ENCODE measurements at regions of chr11 and their contacts with region 1.

Region 1: GRCh38 chr11:86101941-86102407 is 33.1 kb upstream of the PICALM start:
- DNase-seq: no peak
- H3K4me3 ChIP-seq: no peak overlapping the region
- CTCF ChIP-seq: no peak

Region 2: DNA sequence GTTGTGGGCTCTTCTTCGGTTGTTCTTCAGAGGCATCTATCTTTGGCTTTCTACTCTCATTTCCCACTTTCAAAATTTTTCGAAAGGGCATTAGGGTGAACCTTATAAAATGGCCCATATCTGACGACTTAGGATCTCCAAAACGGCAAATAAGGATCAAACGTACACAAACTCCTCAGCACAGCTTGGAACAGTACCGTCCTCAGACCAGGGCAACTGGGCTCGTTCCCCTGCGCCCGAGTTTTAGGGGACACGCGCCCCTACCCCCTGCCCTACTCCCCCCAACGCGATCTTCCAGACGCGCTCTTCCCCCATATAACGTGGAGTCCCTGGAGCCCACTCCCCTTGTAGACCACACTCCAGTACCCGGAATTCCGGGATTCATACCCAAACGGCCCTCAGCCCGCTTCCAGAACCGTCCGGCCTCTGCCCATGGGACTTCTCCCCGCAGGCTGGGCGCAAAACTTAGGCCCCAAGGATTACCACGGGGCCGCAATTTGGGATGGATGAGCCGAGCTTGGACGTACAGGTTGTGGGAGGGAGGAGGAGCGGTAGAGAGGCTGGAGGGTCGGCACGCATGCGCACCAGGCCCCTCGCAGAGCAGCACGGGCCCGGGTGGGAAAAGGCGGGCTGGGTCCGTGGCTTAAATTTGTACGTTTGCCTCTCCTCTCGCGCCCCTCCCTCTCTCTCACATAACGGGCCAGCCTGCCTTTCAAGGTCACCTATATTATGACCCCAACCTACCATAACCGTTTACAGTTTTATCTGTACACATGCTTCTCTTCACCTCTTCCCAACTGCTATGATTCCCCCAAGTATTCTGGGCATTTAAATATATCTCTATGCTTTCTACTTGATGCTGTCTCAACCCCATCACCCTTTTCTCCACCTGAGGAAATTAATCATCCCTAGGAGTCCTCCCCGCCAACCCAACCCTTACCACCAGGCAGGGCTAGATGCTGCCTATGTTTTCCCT is 419.4 kb before region 1 on chr11:
- CTCF ChIA-PET with region 1: no interaction called
- POLR2A ChIA-PET with region 1: no interaction called
- DNase-seq: no peak
- H3K4me3 ChIP-seq: peak overlapping the region; percentile 61
- CTCF ChIP-seq: no peak

Region 3: DNA sequence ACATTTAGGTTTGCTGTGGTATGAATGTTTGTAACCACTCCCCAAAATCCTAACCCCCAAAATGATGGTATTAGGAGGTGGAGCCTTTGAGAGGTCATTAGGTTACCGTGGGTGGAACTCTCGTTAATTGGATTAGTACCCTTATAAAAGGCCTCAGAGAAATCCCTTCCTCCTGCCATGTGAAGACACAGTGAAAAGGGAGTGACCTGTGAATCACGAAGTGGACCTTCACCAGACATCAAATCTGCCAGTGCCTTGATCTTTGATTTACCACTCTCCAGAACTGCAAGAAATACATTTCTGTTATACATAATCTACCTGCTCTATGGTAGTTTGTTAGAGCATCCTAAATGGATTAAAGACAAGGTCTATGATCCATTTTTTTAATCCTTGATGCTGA is 20.5 kb before region 1 on chr11:
- CTCF ChIA-PET with region 1: no interaction called
- POLR2A ChIA-PET with region 1: no interaction called
- DNase-seq: no peak
- H3K4me3 ChIP-seq: no peak overlapping the region
- CTCF ChIP-seq: no peak

Region 4: GRCh38 chr11:86116386-86116726 is 14.4 kb after region 1 on chr11:
- CTCF ChIA-PET with region 1: interaction called, 11 read pairs
- POLR2A ChIA-PET with region 1: interaction called, 4 read pairs
- DNase-seq: peak; percentile 87
- H3K4me3 ChIP-seq: no peak overlapping the region
- CTCF ChIP-seq: no peak

Measured in AG04449 (cell line).